Common myeloid progenitor, CD34-positive (primary cell): ENCODE measurements at regions of chr19 and their contacts with region 1.

Region 1: DNA sequence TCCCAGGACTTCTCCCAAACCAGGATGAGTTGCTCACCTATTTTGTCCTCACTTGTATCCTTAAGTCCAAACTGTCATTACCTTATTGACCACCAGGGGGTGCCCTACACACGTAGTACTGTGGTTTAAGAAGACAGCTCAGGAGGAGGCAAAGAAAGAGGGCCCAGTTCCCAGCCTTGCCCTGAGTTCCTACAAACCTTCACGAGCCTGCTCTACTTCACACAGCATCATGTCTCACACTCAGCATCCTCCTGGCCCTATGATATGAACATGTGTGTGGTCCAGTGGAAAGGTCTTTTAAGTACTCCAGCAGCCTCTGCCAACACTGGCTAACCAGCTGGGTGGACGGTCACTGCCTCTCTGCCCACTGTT is 8.1 kb upstream of the ZNF784 start:
- DNase-seq: peak; percentile 96 to 99 (median 97)
- H3K4me3 ChIP-seq: no peak overlapping the region
- H3K27ac ChIP-seq: no peak overlapping the region
- H3K4me1 ChIP-seq: peaks cover 5 to 36% (median 27%) of the 10 kb centered on the region in 4 experiments
- H3K27me3 ChIP-seq: no peaks in the 10 kb centered on the region

Region 2: GRCh38 chr19:55516878-55517620 is 115.4 kb before region 1 on chr19:
- CTCF ChIA-PET with region 1: interaction called, 53 read pairs
- POLR2A ChIA-PET with region 1: no interaction called
- DNase-seq: peak; percentile 90 to 93 (median 90)
- H3K4me3 ChIP-seq: peak overlapping the region in 6 of 7 experiments; percentile 27 to 79 (median 64)
- H3K27ac ChIP-seq: peak overlapping the region; percentile 6 to 79
- H3K4me1 ChIP-seq: peaks cover 0 to 7% (median 4%) of the 10 kb centered on the region in 4 experiments
- H3K27me3 ChIP-seq: no peaks in the 10 kb centered on the region

Region 3: DNA sequence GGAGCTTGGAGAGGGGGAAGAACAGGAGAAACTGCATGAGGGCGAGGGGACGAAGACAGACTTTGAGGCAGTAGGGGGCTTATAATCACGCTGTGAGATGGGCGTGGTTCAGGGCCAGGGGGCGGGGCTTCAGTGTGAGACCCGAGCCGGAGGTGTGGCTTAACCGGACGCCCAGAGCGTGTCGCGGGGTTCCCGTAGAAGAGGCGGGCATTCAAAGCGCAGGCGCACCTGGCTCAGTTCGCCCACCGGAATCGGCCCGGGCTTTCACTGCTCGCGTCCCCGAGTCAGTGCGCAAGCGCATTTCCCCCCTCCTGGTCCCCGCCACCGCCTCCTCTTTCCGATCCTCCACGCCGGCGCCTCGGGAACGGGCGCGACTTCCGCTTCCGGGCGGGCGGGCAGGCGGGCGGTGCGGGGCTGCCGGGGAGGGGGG is 27.2 kb before region 1 on chr19:
- CTCF ChIA-PET with region 1: interaction called, 27 read pairs
- POLR2A ChIA-PET with region 1: interaction called, 7 read pairs
- DNase-seq: peak; percentile 95 to 97 (median 97)
- H3K4me3 ChIP-seq: peak overlapping the region; percentile 43 to 95 (median 78)
- H3K27ac ChIP-seq: peak overlapping the region; percentile 55 to 87
- H3K4me1 ChIP-seq: peaks cover 0 to 38% (median 32%) of the 10 kb centered on the region in 4 experiments
- H3K27me3 ChIP-seq: no peaks in the 10 kb centered on the region

Region 4: DNA sequence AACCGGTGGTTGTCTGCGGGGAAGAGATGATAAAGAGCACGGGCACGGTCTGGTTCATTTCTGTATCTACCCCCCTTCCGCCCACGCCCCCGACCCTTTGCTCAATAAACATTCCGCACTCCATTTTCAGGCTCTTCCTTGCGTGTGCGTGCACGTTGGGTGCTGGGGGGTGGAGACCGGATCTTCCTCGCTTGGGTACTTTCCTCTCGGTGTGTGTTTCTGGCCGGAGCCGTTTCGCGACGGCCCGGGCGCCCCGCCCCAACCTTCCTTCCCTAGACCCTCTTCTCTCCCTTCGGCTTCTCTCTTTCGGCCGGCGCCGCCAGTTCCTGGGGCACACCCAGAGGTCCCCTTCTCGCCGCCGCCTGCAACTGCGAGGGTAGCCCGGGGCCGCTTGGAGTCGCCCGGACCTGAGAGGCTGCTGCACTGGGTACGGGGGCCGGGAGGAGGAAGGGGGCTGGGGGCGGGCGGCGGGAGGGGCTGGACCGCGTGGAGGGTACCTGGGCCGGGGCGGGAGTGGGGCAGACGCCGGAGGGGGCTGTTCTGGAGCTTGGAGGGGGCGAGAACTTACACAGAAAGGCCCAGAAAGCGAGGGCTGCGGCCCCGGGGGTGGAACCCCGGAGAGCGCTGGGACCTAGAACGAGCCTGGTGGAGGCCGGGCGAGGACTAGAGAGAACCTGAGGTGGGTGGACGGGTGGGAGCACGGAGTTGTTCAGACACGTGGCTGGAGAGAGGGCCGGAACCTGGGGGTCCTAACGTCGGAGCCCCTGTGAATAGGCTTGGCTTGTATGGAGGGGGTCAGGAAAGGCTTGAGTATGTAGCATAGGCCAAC is 11.1 kb after region 1 on chr19 and contains the start of gene ZNF581:
- CTCF ChIA-PET with region 1: interaction called, 128 read pairs
- POLR2A ChIA-PET with region 1: interaction called, 4 read pairs
- DNase-seq: peak; percentile 74 to 85 (median 84)
- H3K4me3 ChIP-seq: peak within 1 kb of the TSS; percentile 48 to 96 (median 77)
- H3K27ac ChIP-seq: peak within 1 kb of the TSS; percentile 64 to 86
- H3K4me1 ChIP-seq: peaks cover 5 to 63% (median 54%) of the 10 kb centered on the region in 4 experiments
- H3K27me3 ChIP-seq: no peaks in the 10 kb centered on the region

Region 5: GRCh38 chr19:55670280-55671053 is 38.0 kb after region 1 on chr19:
- CTCF ChIA-PET with region 1: interaction called, 20 read pairs
- POLR2A ChIA-PET with region 1: no interaction called
- DNase-seq: no peak
- H3K4me3 ChIP-seq: no peak overlapping the region
- H3K27ac ChIP-seq: no peak overlapping the region
- H3K4me1 ChIP-seq: peaks cover 0 to 13% (median 7%) of the 10 kb centered on the region in 4 experiments
- H3K27me3 ChIP-seq: no peaks in the 10 kb centered on the region